ENCODE measurements at regions of chr1 and their contacts with region 1.

Region 1: GRCh38 chr1:13965770-13966398 is 265.9 kb downstream of the PRDM2 start:
- DNase-seq: peak; percentile 75 to 84 (median 80)
- H3K4me3 ChIP-seq: no peak overlapping the region
- H3K27ac ChIP-seq: no peak overlapping the region
- H3K4me1 ChIP-seq: no peaks in the 10 kb centered on the region
- H3K27me3 ChIP-seq: no peaks in the 10 kb centered on the region
- CTCF ChIP-seq: peak; percentile 40 to 70 (median 56)
- EP300 ChIP-seq: no peak
- POLR2A ChIP-seq: no peak

Region 2: DNA sequence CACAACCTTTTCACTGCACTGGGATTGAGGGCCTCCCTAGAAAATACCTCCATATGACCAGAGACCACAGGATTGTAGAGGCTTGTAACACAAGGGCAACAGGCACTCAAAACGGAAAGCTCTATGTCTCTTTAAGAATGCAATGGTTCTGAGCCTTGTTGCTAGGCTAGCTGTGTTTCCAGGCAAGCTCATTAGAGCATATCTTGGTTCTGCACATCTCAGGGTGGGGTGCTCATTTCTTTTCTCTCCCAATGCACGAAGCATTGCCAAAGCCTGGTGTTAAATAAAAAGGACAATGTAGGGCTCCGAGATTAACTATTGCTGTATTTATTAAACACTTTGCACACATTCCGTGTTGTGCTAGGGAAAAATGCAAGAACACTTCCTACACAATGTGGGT is 50.0 kb after region 1 on chr1:
- intact Hi-C with region 1: no loop called
- DNase-seq: no peak
- H3K4me3 ChIP-seq: no peak overlapping the region
- H3K27ac ChIP-seq: no peak overlapping the region
- H3K4me1 ChIP-seq: no peaks in the 10 kb centered on the region
- H3K27me3 ChIP-seq: no peaks in the 10 kb centered on the region
- CTCF ChIP-seq: no peak
- EP300 ChIP-seq: no peak
- POLR2A ChIP-seq: no peak

Region 3: DNA sequence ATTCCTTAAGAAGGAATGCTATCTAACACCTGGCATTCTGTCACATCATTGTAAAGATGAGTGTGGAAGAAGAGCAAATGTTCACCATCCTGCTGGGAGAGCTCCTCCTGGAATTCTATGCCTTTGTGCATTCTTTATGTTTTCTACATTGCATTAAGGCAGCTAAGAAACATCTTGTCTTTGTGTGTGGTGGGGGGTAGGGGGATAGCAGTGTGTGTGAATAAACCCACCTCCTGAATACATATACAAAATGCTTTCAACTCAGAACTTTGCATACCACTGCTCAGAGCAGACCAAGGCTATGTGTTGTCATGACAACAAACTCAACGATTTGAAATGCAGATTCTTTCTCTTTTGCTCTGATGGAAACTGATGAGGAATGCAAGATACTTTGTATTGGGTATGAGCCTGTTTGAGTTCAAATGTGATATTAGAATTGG is 439.0 kb after region 1 on chr1:
- intact Hi-C with region 1: no loop called
- DNase-seq: no peak
- H3K4me3 ChIP-seq: no peak overlapping the region
- H3K27ac ChIP-seq: no peak overlapping the region
- H3K4me1 ChIP-seq: no peaks in the 10 kb centered on the region
- H3K27me3 ChIP-seq: no peaks in the 10 kb centered on the region
- CTCF ChIP-seq: no peak
- EP300 ChIP-seq: no peak
- POLR2A ChIP-seq: no peak

Region 4: GRCh38 chr1:15100121-15100874 is 1134.4 kb after region 1 on chr1:
- intact Hi-C with region 1: loop called in 2 of 4 experiments (anchors 5 to 10 kb)
- DNase-seq: peak; percentile 46 to 76 (median 57)
- H3K4me3 ChIP-seq: no peak overlapping the region
- H3K27ac ChIP-seq: no peak overlapping the region
- H3K4me1 ChIP-seq: no peaks in the 10 kb centered on the region
- H3K27me3 ChIP-seq: no peaks in the 10 kb centered on the region
- CTCF ChIP-seq: peak; percentile 63 to 84 (median 82)
- EP300 ChIP-seq: no peak
- POLR2A ChIP-seq: no peak